Activated naive CD4-positive, alpha-beta T cell treated with anti-CD3 and anti-CD28 coated beads for 36 hours (primary cell): ENCODE measurements at regions of chr17 and their contacts with region 1.

Region 1: DNA sequence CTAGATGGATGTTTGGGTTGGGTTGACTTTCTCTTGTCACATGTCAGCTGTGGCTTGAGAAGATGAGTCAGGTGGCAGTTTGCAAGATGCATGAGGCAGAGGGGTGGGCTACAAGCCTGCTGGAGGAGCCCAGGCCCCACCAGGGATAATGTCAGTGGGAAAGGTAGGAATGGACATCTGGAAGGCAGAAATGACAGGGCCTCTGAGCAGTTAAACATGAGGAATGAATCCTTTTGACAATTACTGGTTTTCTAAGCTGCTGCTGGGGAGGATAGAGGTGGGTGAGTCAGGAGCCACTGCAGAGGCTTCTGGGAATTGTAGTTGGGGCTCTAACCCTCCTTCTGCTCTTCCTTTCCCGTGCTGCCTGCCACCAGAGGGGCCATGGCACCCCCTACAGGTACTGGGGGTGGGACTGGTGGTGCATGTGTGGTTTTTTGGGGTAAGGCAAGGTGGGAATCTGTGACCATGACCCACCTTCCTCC is 15.7 kb downstream of the SLC52A1 start:
- DNase-seq: peak; percentile 61
- H3K4me3 Mint-ChIP-seq: no peak overlapping the region
- H3K27ac Mint-ChIP-seq: no peak overlapping the region
- H3K4me1 Mint-ChIP-seq: peaks cover 7% of the 10 kb centered on the region
- H3K27me3 Mint-ChIP-seq: no peaks in the 10 kb centered on the region

Region 2: DNA sequence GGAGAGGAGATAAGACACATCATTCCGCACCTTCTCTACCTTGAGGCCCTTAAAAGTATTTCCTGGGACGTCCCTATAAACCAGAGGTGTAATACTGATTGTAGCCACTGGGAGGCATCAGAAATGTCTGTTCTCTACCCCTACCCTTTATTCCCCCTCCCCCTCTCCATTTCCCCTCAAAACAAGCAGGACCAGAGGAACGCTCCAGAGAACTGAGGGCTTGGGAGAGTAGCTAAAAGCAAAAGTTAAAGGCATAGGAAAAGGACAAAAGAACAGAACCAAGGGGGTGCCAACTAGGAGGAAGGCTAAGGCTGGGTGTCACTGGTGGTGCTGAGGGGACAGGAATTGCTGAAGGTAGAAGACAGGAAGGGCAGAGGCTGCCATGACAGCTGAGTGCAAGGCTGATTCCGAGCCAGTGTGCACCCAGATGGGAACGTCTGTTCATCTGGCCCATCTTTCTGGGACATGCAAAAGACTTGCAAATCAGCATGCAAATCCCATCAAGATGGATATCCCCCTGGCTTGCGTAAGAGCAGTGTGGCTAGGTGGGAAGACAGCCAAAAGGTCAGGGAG is 38.8 kb before region 1 on chr17:
- CTCF ChIA-PET with region 1: no interaction called
- intact Hi-C with region 1: loop called (anchors 5 kb)
- DNase-seq: peak; percentile 62
- H3K4me3 Mint-ChIP-seq: no peak overlapping the region
- H3K27ac Mint-ChIP-seq: peak overlapping the region; percentile 67
- H3K4me1 Mint-ChIP-seq: peaks cover 23% of the 10 kb centered on the region
- H3K27me3 Mint-ChIP-seq: no peaks in the 10 kb centered on the region

Region 3: DNA sequence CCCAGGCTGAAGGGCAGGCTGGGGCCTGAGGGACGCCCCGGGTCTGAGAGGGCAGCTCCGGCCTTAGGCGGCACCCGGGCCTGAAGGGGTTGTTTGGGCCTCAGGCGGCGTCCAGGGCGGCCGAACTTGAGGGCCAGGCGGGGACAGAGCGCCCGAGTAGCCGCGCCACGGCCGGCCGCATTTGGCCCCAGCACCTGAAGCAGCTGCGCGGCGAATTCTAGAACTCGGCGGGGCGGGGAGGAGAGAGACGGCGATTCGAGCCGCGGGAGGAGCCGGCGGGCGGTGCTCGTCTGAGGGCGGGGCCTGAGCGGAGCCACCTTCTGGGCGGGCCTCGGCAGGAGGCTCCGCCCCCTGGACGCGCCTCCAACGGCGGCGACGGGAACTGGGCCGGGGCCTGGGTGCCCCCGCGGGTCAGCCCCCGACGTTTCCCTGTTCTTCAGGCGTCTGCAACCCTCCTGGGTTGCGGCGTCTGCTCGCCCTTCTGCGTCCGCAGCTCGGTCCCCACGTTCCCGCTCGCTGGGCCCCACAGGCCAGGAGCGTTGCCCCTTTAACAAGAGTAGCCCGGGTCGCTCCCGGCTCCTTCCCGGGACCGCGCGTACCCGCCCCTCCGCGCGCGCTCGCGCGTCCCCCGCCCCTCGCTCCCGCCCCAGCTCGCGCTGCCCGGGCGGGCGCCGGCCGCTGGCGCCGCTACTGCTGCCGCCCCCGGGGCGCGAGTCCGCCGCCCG is 22.1 kb before region 1 on chr17 and contains the starts of genes INCA1 and KIF1C:
- CTCF ChIA-PET with region 1: no interaction called
- intact Hi-C with region 1: no loop called
- DNase-seq: peak; percentile 93
- H3K4me3 Mint-ChIP-seq: peak within 1 kb of the TSS; percentile 83
- H3K27ac Mint-ChIP-seq: peak within 1 kb of the TSS; percentile 53
- H3K4me1 Mint-ChIP-seq: peaks cover 18% of the 10 kb centered on the region
- H3K27me3 Mint-ChIP-seq: no peaks in the 10 kb centered on the region
- total RNA-seq, gene INCA1: 0.21 to 0.54 TPM
- total RNA-seq, gene KIF1C: 30.5 to 31.1 TPM